ENCODE measurements at regions of chr13 and their contacts with region 1.

Region 1: DNA sequence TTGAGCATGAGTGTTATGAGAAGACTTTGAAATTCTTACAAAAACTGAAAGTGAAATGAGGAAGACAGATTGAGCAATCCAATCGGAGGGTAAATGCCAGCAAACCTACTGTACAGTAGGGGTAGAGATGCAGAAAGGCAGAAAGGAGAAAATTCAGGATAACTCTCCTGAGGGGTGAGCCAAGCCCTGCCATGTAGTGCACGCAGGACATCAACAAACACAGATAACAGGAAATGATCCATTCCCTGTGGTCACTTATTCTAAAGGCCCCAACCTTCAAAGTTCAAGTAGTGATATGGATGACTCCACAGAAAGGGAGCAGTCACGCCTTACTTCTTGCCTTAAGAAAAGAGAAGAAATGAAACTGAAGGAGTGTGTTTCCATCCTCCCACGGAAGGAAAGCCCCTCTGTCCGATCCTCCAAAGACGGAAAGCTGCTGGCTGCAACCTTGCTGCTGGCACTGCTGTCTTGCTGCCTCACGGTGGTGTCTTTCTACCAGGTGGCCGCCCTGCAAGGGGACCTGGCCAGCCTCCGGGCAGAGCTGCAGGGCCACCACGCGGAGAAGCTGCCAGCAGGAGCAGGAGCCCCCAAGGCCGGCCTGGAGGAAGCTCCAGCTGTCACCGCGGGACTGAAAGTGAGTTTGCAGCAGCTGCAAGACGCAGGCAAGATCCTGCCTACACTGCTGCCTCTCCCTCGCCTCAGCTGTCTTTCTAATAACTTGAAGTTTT is at the start of gene TNFSF13B:
- DNase-seq: peak; percentile 24
- H3K4me3 Mint-ChIP-seq: peak within 1 kb of the TSS; percentile 82
- H3K27ac Mint-ChIP-seq: peak within 1 kb of the TSS; percentile 78
- H3K4me1 Mint-ChIP-seq: peaks cover 40% of the 10 kb centered on the region
- H3K27me3 Mint-ChIP-seq: no peaks in the 10 kb centered on the region
- total RNA-seq, gene TNFSF13B: 1.1 and 1.7 TPM in 2 replicates

Region 2: GRCh38 chr13:107993239-107993872 is 276.4 kb before region 1 on chr13:
- intact Hi-C with region 1: loop called (anchors 10 kb)
- DNase-seq: no peak
- H3K4me3 Mint-ChIP-seq: no peak overlapping the region
- H3K27ac Mint-ChIP-seq: no peak overlapping the region
- H3K4me1 Mint-ChIP-seq: no peaks in the 10 kb centered on the region
- H3K27me3 Mint-ChIP-seq: no peaks in the 10 kb centered on the region

Region 3: DNA sequence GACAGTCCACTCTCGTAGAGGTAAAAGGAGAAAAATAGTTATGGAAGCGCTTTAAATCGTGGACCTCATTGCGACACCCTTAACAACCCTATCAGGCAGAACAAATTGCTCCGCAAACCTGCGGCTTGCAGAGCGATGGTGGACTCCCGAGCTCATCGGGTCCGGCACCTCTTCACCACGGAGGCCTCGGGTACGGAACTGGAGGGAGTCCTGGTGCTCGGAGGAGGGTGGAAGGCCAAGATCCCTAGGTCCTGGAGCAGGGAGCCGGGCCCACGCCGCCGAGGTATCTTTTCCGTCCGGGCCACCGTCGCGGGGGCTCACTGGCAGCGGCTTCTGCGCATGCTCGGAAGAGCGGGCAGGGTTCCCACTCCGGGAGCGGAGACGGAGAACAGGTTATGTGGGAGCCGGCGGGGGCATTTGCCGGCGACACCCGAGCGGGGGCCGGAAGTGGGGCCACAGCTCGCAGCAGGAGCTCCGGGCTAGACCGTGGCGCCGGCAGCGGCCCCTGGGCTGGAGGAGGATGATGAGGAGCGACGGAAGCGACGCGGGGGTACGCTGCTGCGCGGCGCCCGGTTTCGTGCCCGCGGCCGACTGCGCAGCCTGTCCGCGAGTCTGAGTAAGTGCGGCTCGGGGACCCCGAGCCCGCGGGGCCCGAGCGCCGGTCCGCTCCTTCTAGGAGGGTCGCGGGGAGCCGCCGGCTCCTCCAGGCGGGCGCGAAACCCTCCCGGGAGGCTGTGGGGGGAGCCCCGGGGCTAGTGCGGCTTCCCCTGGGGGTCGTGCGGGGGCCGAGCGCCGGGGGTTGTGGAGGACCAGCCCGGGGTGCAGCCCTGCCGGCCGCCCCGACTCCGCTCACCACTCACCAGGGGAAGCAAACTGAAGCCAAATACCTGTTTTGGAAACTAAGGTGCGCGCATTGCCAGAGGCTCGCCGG is 51.5 kb before region 1 on chr13 and contains the start of gene ABHD13:
- intact Hi-C with region 1: loop called (anchors 1 kb)
- DNase-seq: peak; percentile 88
- H3K4me3 Mint-ChIP-seq: peak within 1 kb of the TSS; percentile 91
- H3K27ac Mint-ChIP-seq: peak within 1 kb of the TSS; percentile 88
- H3K4me1 Mint-ChIP-seq: peaks cover 30% of the 10 kb centered on the region
- H3K27me3 Mint-ChIP-seq: no peaks in the 10 kb centered on the region
- total RNA-seq, gene ABHD13: 6.0 and 6.8 TPM in 2 replicates

Region 4: GRCh38 chr13:108227651-108228272 is 42.0 kb before region 1 on chr13:
- intact Hi-C with region 1: loop called (anchors 2 kb)
- DNase-seq: no peak
- H3K4me3 Mint-ChIP-seq: no peak overlapping the region
- H3K27ac Mint-ChIP-seq: no peak overlapping the region
- H3K4me1 Mint-ChIP-seq: peaks cover 24% of the 10 kb centered on the region
- H3K27me3 Mint-ChIP-seq: no peaks in the 10 kb centered on the region

Region 5: GRCh38 chr13:108342369-108343289 is 72.9 kb after region 1 on chr13:
- intact Hi-C with region 1: loop called (anchors 2 kb)
- DNase-seq: no peak
- H3K4me3 Mint-ChIP-seq: no peak overlapping the region
- H3K27ac Mint-ChIP-seq: no peak overlapping the region
- H3K4me1 Mint-ChIP-seq: peaks cover 15% of the 10 kb centered on the region
- H3K27me3 Mint-ChIP-seq: peaks cover 16% of the 10 kb centered on the region

Measured in activated T-helper 2 cell treated with anti-CD3 and anti-CD28 coated beads, Interferon-gamma antibody, Interleukin-2, Interleukin-4, amounts not matched to agents 10 μg/mL and 5 μg/mL and 100 μg/mL, durations not matched to agents 14 hours and 24 hours and 36 hours (primary cell).